A549 (cell line): ENCODE measurements at regions of chr21 and their contacts with region 1.

Region 1: DNA sequence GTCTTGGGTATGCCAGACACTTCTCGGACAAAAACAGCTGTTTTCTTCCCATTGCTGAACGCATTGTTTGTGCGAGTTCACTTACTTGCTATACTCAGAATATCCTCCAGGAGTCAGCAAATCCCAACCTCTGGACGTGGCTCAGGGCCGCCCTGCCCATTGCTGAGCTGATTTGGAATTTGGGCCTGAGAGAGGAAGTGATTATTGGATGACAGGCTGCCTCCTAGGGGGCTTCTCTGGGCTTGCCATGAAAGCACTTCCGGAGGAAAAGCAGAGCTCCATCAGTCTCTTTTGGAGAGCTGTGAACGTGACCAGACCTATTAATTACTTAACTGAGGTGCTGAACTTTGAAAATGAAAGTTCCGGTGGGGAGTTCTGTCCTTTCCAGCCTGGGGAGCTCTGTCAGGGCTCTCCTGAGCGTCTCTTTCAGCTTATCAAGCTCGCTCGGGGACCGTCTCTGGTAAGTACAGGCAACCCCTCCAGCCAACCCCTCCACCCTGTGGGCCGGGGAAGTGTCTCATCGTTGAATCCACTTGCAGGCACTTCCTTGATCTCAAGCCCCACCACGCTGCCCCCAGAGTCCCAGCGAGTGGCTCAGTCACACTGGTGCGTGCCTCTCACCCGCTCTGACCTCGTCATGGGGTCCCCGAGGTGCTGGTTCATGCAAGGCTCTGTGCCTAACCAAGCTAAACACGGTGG is 76.9 kb downstream of the CLIC6 start:
- DNase-seq: peak; percentile 41 to 76
- ATAC-seq: peak; percentile 97 to 98
- H3K4me3 ChIP-seq: no peak overlapping the region
- H3K27ac ChIP-seq: peak overlapping the region; percentile 72 to 85
- H3K4me1 ChIP-seq: peaks cover 4% of the 10 kb centered on the region; the same call in 2 of the 3 replicates
- CTCF ChIP-seq: peak; percentile 72
- EP300 ChIP-seq: no peak
- POLR2A ChIP-seq: no peak
- RAD21 ChIP-seq: peak; percentile 94

Region 2: DNA sequence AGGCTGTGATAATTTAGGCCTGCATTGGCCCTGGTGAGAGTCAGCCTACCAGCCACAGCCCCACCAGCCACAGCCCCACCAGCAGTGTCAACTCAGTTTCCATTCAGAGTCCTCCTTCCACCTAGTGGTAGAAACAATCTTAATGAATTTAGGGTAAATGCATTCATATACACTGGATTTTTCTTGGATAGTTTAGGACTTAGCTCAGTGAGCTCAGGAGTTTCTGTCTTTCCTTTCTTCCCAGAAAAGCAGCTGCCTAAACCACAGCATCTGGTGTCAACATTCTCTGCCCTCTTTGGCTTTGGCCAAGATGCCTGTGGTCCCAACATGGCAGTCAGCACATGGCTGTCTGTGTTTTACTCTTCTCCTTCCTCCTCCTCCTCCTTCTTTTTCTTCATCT is 17.1 kb after region 1 on chr21:
- CTCF ChIA-PET with region 1: interaction called, 33 read pairs
- POLR2A ChIA-PET with region 1: no interaction called
- DNase-seq: no peak
- ATAC-seq: no peak
- H3K4me3 ChIP-seq: no peak overlapping the region
- H3K27ac ChIP-seq: no peak overlapping the region
- H3K4me1 ChIP-seq: no peaks in the 10 kb centered on the region
- CTCF ChIP-seq: no peak
- EP300 ChIP-seq: no peak
- POLR2A ChIP-seq: no peak
- RAD21 ChIP-seq: no peak

Region 3: GRCh38 chr21:34801519-34802132 is 55.9 kb after region 1 on chr21:
- CTCF ChIA-PET with region 1: interaction called, 12 read pairs
- POLR2A ChIA-PET with region 1: no interaction called
- DNase-seq: peak; percentile 22 to 46
- ATAC-seq: peak; percentile 77 to 79; a peak in 4 of 6 replicates
- H3K4me3 ChIP-seq: no peak overlapping the region
- H3K27ac ChIP-seq: peak overlapping the region; percentile 79 to 81
- H3K4me1 ChIP-seq: peaks cover 58% of the 10 kb centered on the region
- CTCF ChIP-seq: peak; percentile 28; the same call in 2 of the 3 replicates
- EP300 ChIP-seq: no peak
- POLR2A ChIP-seq: no peak
- RAD21 ChIP-seq: peak; percentile 56 to 59

Region 4: DNA sequence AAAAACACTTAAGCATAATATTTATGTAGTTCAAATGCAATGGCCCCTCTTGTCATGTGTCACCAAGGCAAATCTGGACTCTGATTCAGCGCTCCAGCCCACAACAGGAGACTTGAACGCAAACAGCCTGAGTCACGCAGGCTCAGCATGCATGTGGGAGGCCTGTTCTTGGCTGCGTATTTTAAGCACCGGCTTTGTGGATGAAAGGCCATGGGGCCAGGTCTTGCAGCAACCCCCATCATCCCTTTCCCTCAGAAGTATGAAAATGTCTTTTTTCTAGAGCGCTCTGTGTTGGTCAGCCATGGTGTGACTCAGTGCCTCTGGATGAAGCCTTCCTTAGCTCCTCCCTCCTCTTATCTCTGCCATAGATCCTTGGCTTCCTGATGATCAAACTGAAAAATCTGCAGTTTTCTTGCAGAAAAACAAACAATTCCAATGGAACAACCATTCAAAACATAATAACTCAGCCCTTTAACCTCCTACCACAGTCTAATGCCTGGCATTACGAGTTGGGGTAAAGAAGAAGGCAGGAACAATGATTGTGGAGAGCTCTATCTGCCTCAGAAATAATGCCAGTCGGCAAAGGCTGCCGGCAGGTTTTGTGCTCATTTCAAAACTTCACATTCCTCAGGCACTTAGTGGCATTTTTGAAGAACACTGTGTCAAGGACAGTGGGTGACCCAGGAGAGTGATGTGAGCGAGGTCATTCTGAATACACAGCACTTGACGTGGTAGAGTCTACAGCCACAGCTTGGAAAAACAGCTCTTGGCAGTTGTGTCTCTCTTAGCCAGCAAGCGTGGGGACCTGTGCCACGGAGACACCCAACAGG is 90.6 kb after region 1 on chr21:
- CTCF ChIA-PET with region 1: interaction called, 18 read pairs
- POLR2A ChIA-PET with region 1: interaction called, 9 read pairs
- DNase-seq: peak; percentile 60 to 94
- ATAC-seq: peak; percentile 95 to 97
- H3K4me3 ChIP-seq: peak overlapping the region; percentile 44
- H3K27ac ChIP-seq: peak overlapping the region; percentile 90 to 92
- H3K4me1 ChIP-seq: peaks cover 35% of the 10 kb centered on the region
- CTCF ChIP-seq: no peak
- EP300 ChIP-seq: peak; percentile 66 to 85; a peak in 2 of 5 replicates
- POLR2A ChIP-seq: no peak
- RAD21 ChIP-seq: peak; percentile 3 to 21; a peak in 1 of 5 replicates

Region 5: GRCh38 chr21:34857874-34858273 is 112.2 kb after region 1 on chr21:
- CTCF ChIA-PET with region 1: interaction called, 19 read pairs
- POLR2A ChIA-PET with region 1: no interaction called
- DNase-seq: no peak
- ATAC-seq: peak; percentile 58 to 73; a peak in 3 of 6 replicates
- H3K4me3 ChIP-seq: no peak overlapping the region
- H3K27ac ChIP-seq: no peak overlapping the region
- H3K4me1 ChIP-seq: peaks cover 26% of the 10 kb centered on the region
- CTCF ChIP-seq: no peak
- EP300 ChIP-seq: no peak
- POLR2A ChIP-seq: no peak
- RAD21 ChIP-seq: no peak

Region 6: DNA sequence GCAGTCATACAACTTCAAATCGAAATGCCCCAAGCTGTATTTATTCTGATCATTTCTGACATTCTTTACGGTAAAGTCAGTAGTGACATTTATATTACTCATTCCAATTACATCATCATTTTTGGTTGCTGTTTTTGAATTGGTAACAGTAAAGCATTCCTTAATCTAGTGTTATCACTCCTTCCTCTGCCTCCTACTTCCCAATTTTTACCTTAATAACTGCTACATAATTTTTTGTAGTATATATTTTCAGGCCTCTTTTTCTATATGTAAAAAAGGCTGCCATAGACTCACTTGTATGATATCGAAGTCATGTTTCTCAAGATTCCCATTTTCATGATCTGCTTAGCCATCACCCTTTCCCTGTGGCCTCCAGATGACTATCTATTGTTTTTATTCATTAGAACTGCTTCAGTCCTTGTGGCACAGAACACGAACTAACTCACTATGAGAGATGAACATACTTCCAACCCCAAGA is 136.2 kb after region 1 on chr21:
- CTCF ChIA-PET with region 1: interaction called, 46 read pairs
- POLR2A ChIA-PET with region 1: interaction called, 70 read pairs
- DNase-seq: peak in 1 of 2 experiments; percentile 57
- ATAC-seq: peak; percentile 59 to 62; a peak in 3 of 6 replicates
- H3K4me3 ChIP-seq: 0 out of 3 replicates have a peak overlapping the region, but pooled peaks have one; percentile 11
- H3K27ac ChIP-seq: peak overlapping the region; percentile 93 to 100
- H3K4me1 ChIP-seq: peaks cover 65% of the 10 kb centered on the region
- CTCF ChIP-seq: no peak
- EP300 ChIP-seq: peak in 1 of 2 experiments; percentile 21; a peak in 1 of 5 replicates
- POLR2A ChIP-seq: no peak
- RAD21 ChIP-seq: no peak

Region 7: GRCh38 chr21:35400233-35400957 is 654.7 kb after region 1 on chr21:
- CTCF ChIA-PET with region 1: interaction called, 14 read pairs
- POLR2A ChIA-PET with region 1: no interaction called
- DNase-seq: peak; percentile 5 to 65
- ATAC-seq: peak; percentile 75 to 85
- H3K4me3 ChIP-seq: no peak overlapping the region
- H3K27ac ChIP-seq: no peak overlapping the region
- H3K4me1 ChIP-seq: peaks cover 5% of the 10 kb centered on the region; the same call in 1 of the 3 replicates
- CTCF ChIP-seq: peak; percentile 63
- EP300 ChIP-seq: no peak
- POLR2A ChIP-seq: no peak
- RAD21 ChIP-seq: peak; percentile 83 to 87